ENCODE measurements at regions of chr10 and their contacts with region 1.

Region 1: GRCh38 chr10:104353325-104354048 is at the start of gene CFAP58:
- DNase-seq: peak; percentile 95
- H3K4me3 Mint-ChIP-seq: no peak within 1 kb of the TSS
- H3K27ac Mint-ChIP-seq: no peak within 1 kb of the TSS
- H3K4me1 Mint-ChIP-seq: peaks cover 13% of the 10 kb centered on the region
- H3K27me3 Mint-ChIP-seq: no peaks in the 10 kb centered on the region
- CTCF ChIP-seq: peak; percentile 41
- total RNA-seq, gene CFAP58: 0.89 and 1.1 TPM in 2 replicates

Region 2: GRCh38 chr10:104045151-104046089 is 308.1 kb before region 1 on chr10:
- CTCF ChIA-PET with region 1: no interaction called
- POLR2A ChIA-PET with region 1: no interaction called
- intact Hi-C with region 1: loop called (anchors 5 kb)
- DNase-seq: peak; percentile 64
- H3K4me3 Mint-ChIP-seq: no peak overlapping the region
- H3K27ac Mint-ChIP-seq: no peak overlapping the region
- H3K4me1 Mint-ChIP-seq: peaks cover 4% of the 10 kb centered on the region
- H3K27me3 Mint-ChIP-seq: no peaks in the 10 kb centered on the region
- CTCF ChIP-seq: peak; percentile 47

Region 3: DNA sequence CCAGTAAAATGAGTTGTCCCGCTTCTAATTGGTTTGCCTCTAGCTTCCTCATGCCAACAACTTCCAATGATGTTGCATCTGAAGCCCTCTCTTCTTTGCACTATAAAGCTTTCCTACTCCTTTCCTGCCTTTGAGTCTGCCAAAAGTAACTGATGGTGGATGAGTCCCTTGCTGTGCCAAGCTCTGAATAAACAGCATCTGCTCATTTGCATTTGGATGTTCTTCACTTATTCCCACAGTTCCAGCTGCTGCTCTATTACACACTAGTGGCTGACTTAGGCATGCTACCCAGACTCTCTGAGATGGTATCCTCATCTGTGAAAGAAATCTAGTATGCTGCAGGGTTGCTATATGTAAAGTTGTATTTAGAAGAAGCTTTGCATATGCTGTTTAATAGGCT is 206.6 kb before region 1 on chr10:
- CTCF ChIA-PET with region 1: no interaction called
- POLR2A ChIA-PET with region 1: no interaction called
- intact Hi-C with region 1: no loop called
- DNase-seq: no peak
- H3K4me3 Mint-ChIP-seq: no peak overlapping the region
- H3K27ac Mint-ChIP-seq: no peak overlapping the region
- H3K4me1 Mint-ChIP-seq: no peaks in the 10 kb centered on the region
- H3K27me3 Mint-ChIP-seq: peaks cover 35% of the 10 kb centered on the region
- CTCF ChIP-seq: no peak

Region 4: GRCh38 chr10:104281694-104282093 is 71.8 kb before region 1 on chr10:
- CTCF ChIA-PET with region 1: interaction called, 156 read pairs
- POLR2A ChIA-PET with region 1: interaction called, 7 read pairs
- intact Hi-C with region 1: no loop called
- DNase-seq: no peak
- H3K4me3 Mint-ChIP-seq: no peak overlapping the region
- H3K27ac Mint-ChIP-seq: no peak overlapping the region
- H3K4me1 Mint-ChIP-seq: no peaks in the 10 kb centered on the region
- H3K27me3 Mint-ChIP-seq: no peaks in the 10 kb centered on the region
- CTCF ChIP-seq: no peak

Region 5: DNA sequence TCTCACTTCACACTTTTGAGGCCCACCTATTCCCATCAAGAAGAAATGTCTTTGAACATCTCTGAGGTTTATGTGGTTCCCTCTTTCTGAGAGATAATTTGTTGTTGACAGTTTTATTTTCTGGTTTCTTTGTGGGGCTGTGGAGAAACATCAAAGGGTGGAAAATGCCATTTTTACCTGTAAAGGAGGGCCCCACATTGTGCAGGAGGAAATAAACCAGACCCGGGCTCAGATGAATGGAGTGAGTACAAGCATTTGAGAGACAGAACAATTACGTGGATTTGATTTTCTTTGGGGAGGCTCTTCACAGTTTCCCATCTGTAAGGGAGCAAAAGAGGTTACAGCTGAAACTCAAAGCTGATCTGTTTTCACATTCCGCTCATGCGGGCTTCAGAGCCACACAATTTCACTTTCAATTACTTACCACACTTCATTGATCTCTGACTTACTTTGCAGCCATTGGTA is 45.0 kb before region 1 on chr10:
- CTCF ChIA-PET with region 1: interaction called, 132 read pairs
- POLR2A ChIA-PET with region 1: interaction called, 14 read pairs
- intact Hi-C with region 1: loop called (anchors 1 kb)
- DNase-seq: no peak
- H3K4me3 Mint-ChIP-seq: no peak overlapping the region
- H3K27ac Mint-ChIP-seq: peak overlapping the region; percentile 37
- H3K4me1 Mint-ChIP-seq: peaks cover 30% of the 10 kb centered on the region
- H3K27me3 Mint-ChIP-seq: no peaks in the 10 kb centered on the region
- CTCF ChIP-seq: no peak

Region 6: DNA sequence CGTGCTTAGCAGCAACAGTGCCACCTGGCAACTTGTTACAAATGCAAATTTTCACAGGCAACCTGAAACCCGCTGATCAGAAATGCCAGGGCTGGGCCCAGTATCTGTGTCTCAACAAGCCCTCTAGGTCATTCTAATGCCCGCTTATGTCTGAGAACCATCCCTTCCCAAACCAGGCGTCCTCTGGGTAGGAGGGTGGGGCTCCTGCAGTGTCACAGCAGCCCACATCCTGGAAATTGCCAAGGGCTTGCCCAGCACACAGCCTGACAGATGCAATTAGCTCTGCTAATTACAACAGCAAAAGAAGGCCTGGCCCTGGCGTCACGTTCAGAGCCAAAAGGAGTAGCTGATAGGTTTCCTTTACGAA is 31.1 kb before region 1 on chr10:
- CTCF ChIA-PET with region 1: interaction called, 34 read pairs
- POLR2A ChIA-PET with region 1: interaction called, 28 read pairs
- intact Hi-C with region 1: no loop called
- DNase-seq: peak; percentile 91
- H3K4me3 Mint-ChIP-seq: no peak overlapping the region
- H3K27ac Mint-ChIP-seq: peak overlapping the region; percentile 95
- H3K4me1 Mint-ChIP-seq: peaks cover 74% of the 10 kb centered on the region
- H3K27me3 Mint-ChIP-seq: no peaks in the 10 kb centered on the region
- CTCF ChIP-seq: no peak

Region 7: DNA sequence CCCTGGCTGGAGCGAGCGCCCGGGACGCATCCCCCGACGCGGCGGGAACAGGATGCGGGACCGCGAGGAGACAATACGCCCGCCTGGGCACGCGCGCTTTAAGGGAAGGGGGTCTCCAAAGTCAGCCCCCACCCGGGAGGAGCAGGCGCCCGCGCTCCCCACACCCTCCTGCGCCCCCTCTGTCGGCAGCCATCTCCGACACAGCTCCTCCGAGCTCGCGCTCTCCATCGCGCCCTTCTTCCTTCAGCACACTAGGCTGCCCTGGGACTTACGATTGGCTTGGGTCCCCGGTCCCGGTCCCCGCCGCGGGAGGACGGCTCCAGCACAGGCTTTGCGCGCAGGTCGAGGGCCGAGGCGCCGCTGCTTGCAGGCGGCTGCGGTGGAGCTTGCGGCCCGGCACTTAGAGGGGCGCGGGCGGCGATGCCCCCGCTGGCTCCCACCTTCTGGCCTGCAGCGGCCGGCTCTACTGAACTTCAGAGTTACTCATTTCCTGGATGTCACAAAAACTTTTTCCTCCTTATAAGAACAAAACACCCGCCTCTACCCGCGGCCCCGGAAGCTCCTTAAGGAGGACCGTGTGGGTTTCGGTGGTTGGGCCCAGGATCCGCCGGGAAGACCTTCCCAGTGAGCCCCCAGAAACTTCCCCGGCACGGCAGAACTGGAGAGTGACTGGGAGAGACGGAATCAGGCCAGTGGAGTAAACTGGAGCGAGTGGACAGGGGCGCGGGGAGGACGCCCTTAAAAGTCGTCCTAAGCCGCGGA is 15.3 kb before region 1 on chr10 and contains the start of gene ITPRIP:
- CTCF ChIA-PET with region 1: interaction called, 26 read pairs
- POLR2A ChIA-PET with region 1: interaction called, 95 read pairs
- intact Hi-C with region 1: loop called (anchors 1 kb)
- DNase-seq: peak; percentile 81
- H3K4me3 Mint-ChIP-seq: peak within 1 kb of the TSS; percentile 80
- H3K27ac Mint-ChIP-seq: peak within 1 kb of the TSS; percentile 97
- H3K4me1 Mint-ChIP-seq: peaks cover 39% of the 10 kb centered on the region
- H3K27me3 Mint-ChIP-seq: no peaks in the 10 kb centered on the region
- CTCF ChIP-seq: no peak
- total RNA-seq, gene ITPRIP: 29.4 and 29.8 TPM in 2 replicates

Region 8: DNA sequence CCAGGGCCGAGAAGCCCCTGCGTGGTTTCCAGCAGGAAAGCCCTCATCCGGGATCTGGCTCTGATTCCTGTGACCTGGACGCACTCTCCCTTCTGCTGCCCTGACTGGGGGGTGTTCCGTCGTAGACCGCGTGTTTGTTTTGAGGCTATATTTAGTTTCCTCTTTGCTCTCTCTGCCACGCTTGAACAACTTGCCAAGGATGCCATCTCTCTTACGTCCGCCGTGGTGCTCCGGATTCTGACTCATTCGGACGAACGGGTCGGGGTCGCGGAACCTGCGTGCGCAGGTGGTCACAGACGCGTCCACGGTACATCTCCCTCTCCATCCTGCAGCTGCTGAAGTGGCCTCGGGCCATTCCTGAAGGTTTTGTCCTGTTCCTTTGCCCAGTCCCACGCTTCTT is 277.2 kb after region 1 on chr10:
- CTCF ChIA-PET with region 1: no interaction called
- POLR2A ChIA-PET with region 1: no interaction called
- intact Hi-C with region 1: no loop called
- DNase-seq: no peak
- H3K4me3 Mint-ChIP-seq: no peak overlapping the region
- H3K27ac Mint-ChIP-seq: no peak overlapping the region
- H3K4me1 Mint-ChIP-seq: no peaks in the 10 kb centered on the region
- H3K27me3 Mint-ChIP-seq: peaks cover 73% of the 10 kb centered on the region
- CTCF ChIP-seq: no peak